ENCODE measurements at regions of chr5 and their contacts with region 1.

Region 1: DNA sequence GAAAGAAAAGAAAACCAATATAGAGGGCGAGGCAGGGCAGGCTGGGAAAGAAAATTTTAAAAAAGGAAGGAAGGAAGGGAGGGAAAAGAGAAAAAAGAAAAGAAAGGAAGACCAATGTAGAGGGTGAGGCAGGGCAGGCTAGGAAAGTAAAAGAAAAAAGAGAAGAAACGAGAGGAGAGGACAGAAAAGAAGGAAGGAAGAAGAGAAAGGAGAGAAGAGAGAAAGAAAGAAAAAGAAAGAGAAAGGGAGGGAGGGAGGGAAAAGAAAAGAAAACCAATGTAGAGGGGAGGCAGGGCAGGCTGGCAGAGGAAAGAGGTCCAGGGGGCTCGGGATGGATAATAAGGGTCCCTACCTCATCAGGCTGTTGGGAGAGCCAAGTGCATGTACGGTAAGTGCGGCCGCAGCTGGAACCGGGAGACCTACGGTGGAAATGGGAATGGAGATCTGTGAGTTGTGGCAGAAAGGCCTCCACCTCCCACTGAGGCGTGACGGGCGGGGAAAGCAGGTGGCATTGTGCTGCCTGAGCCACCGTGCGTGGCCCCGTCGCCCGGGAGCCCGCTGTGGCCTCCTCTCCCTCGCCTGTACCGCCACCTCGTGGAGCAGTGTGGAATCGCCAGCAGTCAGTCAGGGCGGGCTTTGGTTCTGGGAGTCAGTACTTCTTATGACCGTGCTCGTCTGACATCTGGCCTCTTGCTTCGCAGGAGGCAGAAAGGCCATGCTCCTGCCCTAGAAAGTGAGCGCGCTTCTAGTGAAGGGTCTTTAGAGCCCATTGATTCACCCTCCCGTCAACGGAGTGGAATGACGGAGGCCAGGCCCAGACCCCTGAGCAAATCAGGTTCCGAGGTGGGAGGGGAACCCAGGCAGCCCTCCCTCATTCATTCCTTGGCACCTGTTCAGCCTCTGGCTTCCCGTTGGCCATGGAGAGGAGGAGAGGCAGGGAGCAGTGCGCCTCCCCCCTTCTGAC is 10.4 kb upstream of the NHP2 start:
- DNase-seq: peak; percentile 58
- ATAC-seq: peak; percentile 97
- H3K4me3 ChIP-seq: peak overlapping the region in 1 of 3 experiments; percentile 40; a peak in 1 of 6 replicates
- H3K27ac ChIP-seq: no peak overlapping the region
- H3K4me1 ChIP-seq: peaks cover 9% of the 10 kb centered on the region
- H3K27me3 ChIP-seq: peaks cover 2 to 28% of the 10 kb centered on the region in 2 experiments; a peak in 4 of 5 replicates
- CTCF ChIP-seq: peak; percentile 98
- EP300 ChIP-seq: no peak
- POLR2A ChIP-seq: no peak
- RAD21 ChIP-seq: peak; percentile 95

Region 2: GRCh38 chr5:178075840-178076548 is 88.1 kb before region 1 on chr5:
- CTCF ChIA-PET with region 1: interaction called, 31 read pairs
- POLR2A ChIA-PET with region 1: no interaction called
- in situ Hi-C with region 1: no loop called
- intact Hi-C with region 1: loop called (anchors 1 kb)
- DNase-seq: peak; percentile 27
- ATAC-seq: peak; percentile 85
- H3K4me3 ChIP-seq: no peak overlapping the region
- H3K27ac ChIP-seq: no peak overlapping the region
- H3K4me1 ChIP-seq: peaks cover 13% of the 10 kb centered on the region; the same call in 1 of the 2 replicates
- H3K27me3 ChIP-seq: peaks cover 1 to 31% of the 10 kb centered on the region in 2 experiments; a peak in 3 of 5 replicates
- CTCF ChIP-seq: peak; percentile 86
- EP300 ChIP-seq: no peak
- POLR2A ChIP-seq: no peak
- RAD21 ChIP-seq: peak; percentile 72

Region 3: DNA sequence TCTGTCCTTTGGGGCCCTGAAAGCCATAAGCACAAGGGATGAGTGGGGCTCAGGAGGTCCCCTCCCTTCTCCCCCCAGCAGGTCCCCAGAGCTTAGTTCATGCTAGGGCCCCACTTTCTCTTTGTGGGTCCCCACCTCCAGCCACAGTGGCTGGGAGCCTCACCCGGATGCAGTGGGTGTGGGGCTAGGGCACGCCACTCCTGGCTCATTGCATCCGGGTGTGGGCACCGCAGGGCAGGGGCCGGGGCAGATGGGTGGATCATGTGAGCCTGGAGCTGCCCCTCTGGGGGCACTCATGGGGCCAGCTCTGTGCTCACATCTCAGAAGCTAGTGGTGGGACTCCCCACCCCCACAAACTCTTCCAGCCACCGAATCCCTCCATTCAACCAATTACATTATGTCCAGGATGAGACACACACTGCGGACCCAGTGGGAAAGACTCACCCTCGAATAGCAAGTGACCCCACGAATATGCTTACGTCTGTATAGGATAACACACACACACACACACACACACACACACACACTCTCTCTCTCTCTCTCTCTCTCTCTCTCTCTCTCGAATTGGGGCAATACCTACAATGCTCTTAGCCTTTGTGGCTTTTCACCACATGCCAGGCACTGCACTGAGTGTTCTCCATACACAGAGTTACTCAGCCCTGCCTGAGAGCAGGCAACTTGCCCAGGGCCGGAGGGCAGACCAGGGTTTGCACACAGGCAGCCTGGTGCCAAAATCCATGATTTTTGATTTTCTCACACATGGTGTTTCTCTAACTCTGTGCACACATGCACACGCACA is 85.3 kb after region 1 on chr5:
- CTCF ChIA-PET with region 1: no interaction called
- POLR2A ChIA-PET with region 1: no interaction called
- in situ Hi-C with region 1: no loop called
- intact Hi-C with region 1: no loop called
- DNase-seq: no peak
- ATAC-seq: no peak
- H3K4me3 ChIP-seq: no peak overlapping the region
- H3K27ac ChIP-seq: no peak overlapping the region
- H3K4me1 ChIP-seq: no peaks in the 10 kb centered on the region
- H3K27me3 ChIP-seq: peaks cover 2 to 39% of the 10 kb centered on the region in 2 experiments; a peak in 3 of 5 replicates
- CTCF ChIP-seq: no peak
- EP300 ChIP-seq: no peak
- POLR2A ChIP-seq: no peak
- RAD21 ChIP-seq: no peak